Uterus (tissue), 4 donors: ENCODE measurements at regions of chr7 and their contacts with region 1.

Region 1: DNA sequence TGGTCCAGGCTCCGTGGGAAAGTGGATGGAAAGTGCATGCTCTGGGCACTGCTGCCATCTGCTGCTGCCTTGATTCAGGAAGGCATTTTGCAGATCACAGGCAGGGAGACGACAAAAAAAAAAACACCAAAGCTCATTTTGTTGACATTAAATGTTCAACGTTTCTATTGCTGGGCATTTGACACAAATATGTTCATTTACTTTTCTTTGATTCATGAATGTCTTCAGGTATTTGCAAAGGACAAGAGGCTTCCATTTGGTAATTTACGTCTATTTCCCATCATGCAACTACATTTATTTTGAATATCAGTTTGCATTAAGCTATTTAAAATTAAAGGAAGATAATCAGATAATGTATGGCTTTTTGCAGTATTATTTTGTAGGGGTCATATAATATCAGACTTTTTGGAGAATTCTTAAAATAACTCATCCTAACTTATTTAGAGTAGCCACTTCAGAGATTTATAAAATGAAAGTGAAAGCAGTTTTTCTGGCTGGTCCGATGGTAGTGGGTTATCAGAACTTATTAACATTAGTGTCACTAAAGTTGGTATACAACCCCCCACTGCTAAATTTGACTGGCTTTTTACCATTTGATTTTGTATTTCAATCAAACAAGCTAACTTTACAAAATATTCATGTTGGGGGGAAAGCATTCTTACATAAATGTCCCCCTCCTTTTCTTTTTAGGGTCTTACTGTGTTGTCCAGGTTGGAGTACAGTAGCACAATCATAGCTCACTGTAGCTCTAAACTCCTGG is 65.3 kb downstream of the PDIA4 start:
- DNase-seq: peak; percentile 70 to 71
- H3K4me3 ChIP-seq: peak overlapping the region; percentile 32 to 54
- H3K27ac ChIP-seq: peak overlapping the region; percentile 74 to 76
- H3K4me1 ChIP-seq: no peaks in the 10 kb centered on the region
- H3K27me3 ChIP-seq: no peaks in the 10 kb centered on the region
- CTCF ChIP-seq: peak; percentile 56 to 72 (median 65)
- POLR2A ChIP-seq: no peak

Region 2: DNA sequence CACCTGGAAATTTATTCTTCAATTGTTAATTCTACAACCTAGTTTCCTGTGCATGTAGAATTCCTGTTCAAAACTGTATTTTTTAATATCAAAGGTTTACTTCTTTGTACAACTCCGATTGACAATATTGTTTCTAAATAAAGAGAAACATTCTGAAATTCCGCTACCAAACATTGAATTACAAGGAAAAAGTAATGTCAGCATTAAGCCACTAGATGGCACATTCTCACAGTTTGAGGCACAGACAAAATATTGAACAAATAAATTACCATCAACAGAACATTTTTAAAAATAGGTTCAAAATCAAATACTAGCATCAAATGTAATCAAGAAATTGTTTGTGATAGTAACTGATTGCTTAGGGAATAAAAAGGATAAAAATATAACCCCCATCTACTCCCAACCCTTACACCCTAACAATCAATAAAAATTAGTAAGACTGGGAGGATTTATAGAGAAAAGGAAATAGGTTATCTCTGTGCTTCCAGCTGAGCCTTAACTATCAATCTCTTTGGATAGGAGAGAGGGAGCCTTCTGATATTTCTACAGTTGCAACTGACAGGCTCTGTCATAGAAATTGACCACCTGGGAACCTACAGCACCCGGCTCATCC is 459.0 kb before region 1 on chr7:
- intact Hi-C with region 1: loop called (anchors 10 kb)
- DNase-seq: no peak
- H3K4me3 ChIP-seq: no peak overlapping the region
- H3K27ac ChIP-seq: no peak overlapping the region
- H3K4me1 ChIP-seq: no peaks in the 10 kb centered on the region
- H3K27me3 ChIP-seq: no peaks in the 10 kb centered on the region
- CTCF ChIP-seq: peak; percentile 62 to 69 (median 64)
- POLR2A ChIP-seq: no peak

Region 3: DNA sequence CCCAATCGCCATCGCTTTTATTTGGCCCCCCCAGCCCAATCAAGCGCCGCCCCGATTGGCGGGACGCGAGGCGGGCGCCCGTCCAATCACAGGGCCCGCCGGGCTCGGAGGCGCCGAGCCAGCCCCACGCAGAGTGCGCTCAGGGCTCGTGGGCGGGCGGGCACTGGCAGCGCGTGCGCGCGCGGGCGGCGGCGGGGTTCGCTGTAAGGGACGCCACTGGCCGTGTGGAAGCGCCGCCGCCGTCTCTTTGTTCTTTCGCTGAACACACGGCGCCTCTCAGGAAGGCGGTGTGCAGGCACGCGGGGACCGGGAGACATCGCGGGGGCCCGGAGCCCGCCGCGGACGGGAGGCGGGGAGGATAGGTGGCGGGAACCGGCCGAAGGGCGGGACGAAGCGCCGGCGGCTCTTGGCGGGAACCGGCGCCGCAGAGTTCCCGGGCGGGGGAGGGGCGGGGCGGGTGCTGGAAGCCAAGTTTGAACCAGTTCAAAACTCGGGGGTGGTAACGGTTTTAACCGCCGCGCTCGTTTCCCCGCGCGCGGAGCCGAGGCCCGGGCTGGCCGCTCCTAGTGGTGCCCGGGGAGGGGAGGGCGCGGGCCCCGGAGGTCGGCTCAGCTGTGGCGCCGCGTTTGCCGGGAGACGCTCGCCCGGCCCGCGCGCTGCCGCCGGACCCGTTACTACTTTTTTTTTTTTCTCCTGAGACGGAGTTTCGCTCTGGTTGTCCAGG is 78.5 kb before region 1 on chr7:
- intact Hi-C with region 1: loop called (anchors 10 kb)
- DNase-seq: peak; percentile 90 to 95
- H3K4me3 ChIP-seq: peak overlapping the region; percentile 48 to 100
- H3K27ac ChIP-seq: peak overlapping the region; percentile 90 to 98
- H3K4me1 ChIP-seq: no peaks in the 10 kb centered on the region
- H3K27me3 ChIP-seq: no peaks in the 10 kb centered on the region
- CTCF ChIP-seq: peak in 1 of 4 experiments; percentile 1
- POLR2A ChIP-seq: peak; percentile 74 to 90

Region 4: GRCh38 chr7:149005241-149006050 is 42.4 kb after region 1 on chr7:
- intact Hi-C with region 1: no loop called
- DNase-seq: peak; percentile 79 to 88
- H3K4me3 ChIP-seq: no peak overlapping the region
- H3K27ac ChIP-seq: no peak overlapping the region
- H3K4me1 ChIP-seq: no peaks in the 10 kb centered on the region
- H3K27me3 ChIP-seq: no peaks in the 10 kb centered on the region
- CTCF ChIP-seq: peak; percentile 81 to 90 (median 84)
- POLR2A ChIP-seq: no peak